Activated T-helper 1 cell treated with anti-CD3 and anti-CD28 coated beads, Interleukin-12 subunit alpha, Interleukin-12 subunit beta, Interleukin-2, Interleukin-4 antibody, amounts not matched to agents 30 ng/mL and 10 ng/mL and 1 ng/mL, durations not matched to agents 14 hours and 24 hours and 36 hours (primary cell): ENCODE measurements at regions of chr3 and their contacts with region 1.

Region 1: DNA sequence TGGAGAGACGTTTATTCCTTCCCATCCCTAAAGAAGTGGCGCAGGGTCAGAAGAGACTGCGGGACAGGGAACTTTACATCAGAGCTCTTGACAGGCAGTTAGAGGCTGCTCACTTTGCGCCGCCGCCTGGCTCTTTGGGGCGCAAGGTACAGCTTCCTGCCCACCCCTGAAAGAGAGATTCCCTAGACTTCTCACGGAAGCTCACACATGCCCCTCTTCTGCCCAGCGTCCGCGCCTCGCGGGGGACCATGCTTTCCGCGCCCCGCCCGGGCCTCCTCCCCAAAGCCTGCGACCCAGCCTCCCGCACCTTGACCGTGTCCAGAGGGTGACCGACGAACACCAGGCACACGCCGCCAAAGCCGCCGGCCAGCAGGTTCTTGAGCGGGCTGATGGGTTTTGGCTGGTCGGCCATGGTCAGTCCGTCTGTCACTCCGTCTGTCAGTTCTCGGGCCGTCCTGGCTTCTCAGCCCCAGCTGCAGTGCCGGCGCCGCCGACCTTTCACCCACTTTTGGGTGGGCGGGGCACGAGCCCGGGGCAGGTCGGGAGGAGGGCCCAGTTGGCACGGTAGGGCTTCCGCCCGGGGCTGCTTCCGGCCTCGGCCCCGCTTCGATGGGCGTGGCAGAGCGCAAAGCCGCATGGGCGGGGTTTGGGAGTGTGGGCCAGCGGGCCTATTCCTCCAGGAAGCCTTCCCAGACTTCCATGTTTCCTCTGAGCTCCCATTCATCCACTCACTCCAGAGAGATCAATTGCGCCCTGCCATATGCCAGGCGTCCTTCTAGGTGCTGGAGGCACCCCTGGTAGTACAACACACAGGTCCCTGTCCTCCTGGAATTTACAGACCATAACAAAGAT is at the start of gene SLC25A20:
- DNase-seq: peak; percentile 92
- H3K4me3 Mint-ChIP-seq: peak within 1 kb of the TSS; percentile 94
- H3K27ac Mint-ChIP-seq: peak within 1 kb of the TSS; percentile 95
- H3K4me1 Mint-ChIP-seq: peaks cover 29% of the 10 kb centered on the region
- H3K27me3 Mint-ChIP-seq: no peaks in the 10 kb centered on the region
- total RNA-seq, gene SLC25A20: 15.9 and 17.4 TPM in 2 replicates

Region 2: GRCh38 chr3:48472915-48473616 is 425.5 kb before region 1 on chr3:
- intact Hi-C with region 1: loop called (anchors 10 kb)
- DNase-seq: peak; percentile 94
- H3K4me3 Mint-ChIP-seq: peak overlapping the region; percentile 82
- H3K27ac Mint-ChIP-seq: peak overlapping the region; percentile 95
- H3K4me1 Mint-ChIP-seq: peaks cover 64% of the 10 kb centered on the region
- H3K27me3 Mint-ChIP-seq: no peaks in the 10 kb centered on the region

Region 3: DNA sequence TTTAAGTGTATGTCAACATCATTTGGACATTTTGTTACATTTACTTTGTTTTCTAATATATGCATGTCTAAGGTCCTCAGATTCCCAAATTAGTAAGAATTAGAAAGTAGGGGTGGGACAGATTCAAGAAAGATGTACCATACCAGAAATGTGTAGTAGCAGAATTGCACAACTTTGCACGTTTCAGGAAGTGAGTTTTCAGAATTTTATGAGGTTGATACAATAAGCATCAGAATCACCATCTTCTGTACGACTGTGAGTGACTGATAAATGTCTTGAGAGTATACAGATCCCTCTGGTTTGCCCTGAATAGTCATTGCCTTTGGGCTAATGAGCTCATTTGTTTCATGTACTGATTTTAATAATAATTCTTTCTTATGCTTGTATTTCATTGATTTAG is 29.3 kb after region 1 on chr3:
- intact Hi-C with region 1: loop called (anchors 5 kb)
- DNase-seq: no peak
- H3K4me3 Mint-ChIP-seq: peak overlapping the region; percentile 56
- H3K27ac Mint-ChIP-seq: peak overlapping the region; percentile 63
- H3K4me1 Mint-ChIP-seq: peaks cover 61% of the 10 kb centered on the region
- H3K27me3 Mint-ChIP-seq: no peaks in the 10 kb centered on the region

Region 4: GRCh38 chr3:49248846-49249238 is 350.2 kb after region 1 on chr3:
- intact Hi-C with region 1: no loop called
- DNase-seq: no peak
- H3K4me3 Mint-ChIP-seq: no peak overlapping the region
- H3K27ac Mint-ChIP-seq: no peak overlapping the region
- H3K4me1 Mint-ChIP-seq: no peaks in the 10 kb centered on the region
- H3K27me3 Mint-ChIP-seq: peaks cover 4% of the 10 kb centered on the region